GM23248 (cell line): ENCODE measurements at regions of chr18 and their contacts with region 1.

Region 1: GRCh38 chr18:25832001-25832604 is 258.3 kb downstream of the SS18 start:
- DNase-seq: peak; percentile 81
- H3K4me3 ChIP-seq: no peak overlapping the region
- H3K27ac ChIP-seq: no peak overlapping the region
- H3K4me1 ChIP-seq: peaks cover 26% of the 10 kb centered on the region
- H3K27me3 ChIP-seq: peaks cover 4% of the 10 kb centered on the region; the same call in 1 of the 2 replicates

Region 2: GRCh38 chr18:25561918-25562317 is 270.2 kb before region 1 on chr18:
- in situ Hi-C with region 1: loop called (anchors 25 kb)
- DNase-seq: peak; percentile 47
- H3K4me3 ChIP-seq: no peak overlapping the region
- H3K27ac ChIP-seq: no peak overlapping the region
- H3K4me1 ChIP-seq: no peaks in the 10 kb centered on the region
- H3K27me3 ChIP-seq: no peaks in the 10 kb centered on the region

Region 3: GRCh38 chr18:25953126-25953525 is 121.0 kb after region 1 on chr18:
- in situ Hi-C with region 1: no loop called
- DNase-seq: no peak
- H3K4me3 ChIP-seq: no peak overlapping the region
- H3K27ac ChIP-seq: no peak overlapping the region
- H3K4me1 ChIP-seq: no peaks in the 10 kb centered on the region
- H3K27me3 ChIP-seq: no peaks in the 10 kb centered on the region